Activated naive CD4-positive, alpha-beta T cell treated with anti-CD3 and anti-CD28 coated beads for 36 hours (primary cell): ENCODE measurements at regions of chr12 and their contacts with region 1.

Region 1: DNA sequence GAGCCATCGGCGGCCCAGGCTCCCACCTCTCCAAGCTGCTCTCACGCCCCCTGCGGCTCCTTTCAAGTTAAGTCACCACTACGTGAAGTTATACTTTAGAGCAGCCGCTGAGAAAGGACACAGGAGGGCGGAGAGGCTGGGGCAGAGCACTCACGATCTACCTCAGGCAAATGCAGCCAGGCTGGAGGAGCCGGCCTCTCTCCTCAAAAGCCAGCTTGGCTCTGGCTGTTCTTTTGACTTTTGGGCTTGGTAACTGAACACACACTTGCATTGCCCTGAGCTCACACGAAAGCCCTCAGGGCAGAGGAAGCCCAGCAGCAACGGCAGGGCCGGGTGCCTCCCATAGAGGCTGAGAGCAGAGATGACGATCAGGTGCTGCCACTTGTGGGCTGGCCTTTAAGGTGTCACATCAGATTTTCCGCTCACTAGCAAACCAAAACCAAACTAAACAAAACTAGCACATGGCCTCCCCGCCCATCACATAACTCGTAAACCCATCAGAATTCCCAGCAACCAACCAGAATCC is 75.2 kb downstream of the PITPNM2 start:
- DNase-seq: peak; percentile 90
- H3K4me3 Mint-ChIP-seq: peak overlapping the region; percentile 67
- H3K27ac Mint-ChIP-seq: peak overlapping the region; percentile 93
- H3K4me1 Mint-ChIP-seq: peaks cover 44% of the 10 kb centered on the region
- H3K27me3 Mint-ChIP-seq: no peaks in the 10 kb centered on the region

Region 2: DNA sequence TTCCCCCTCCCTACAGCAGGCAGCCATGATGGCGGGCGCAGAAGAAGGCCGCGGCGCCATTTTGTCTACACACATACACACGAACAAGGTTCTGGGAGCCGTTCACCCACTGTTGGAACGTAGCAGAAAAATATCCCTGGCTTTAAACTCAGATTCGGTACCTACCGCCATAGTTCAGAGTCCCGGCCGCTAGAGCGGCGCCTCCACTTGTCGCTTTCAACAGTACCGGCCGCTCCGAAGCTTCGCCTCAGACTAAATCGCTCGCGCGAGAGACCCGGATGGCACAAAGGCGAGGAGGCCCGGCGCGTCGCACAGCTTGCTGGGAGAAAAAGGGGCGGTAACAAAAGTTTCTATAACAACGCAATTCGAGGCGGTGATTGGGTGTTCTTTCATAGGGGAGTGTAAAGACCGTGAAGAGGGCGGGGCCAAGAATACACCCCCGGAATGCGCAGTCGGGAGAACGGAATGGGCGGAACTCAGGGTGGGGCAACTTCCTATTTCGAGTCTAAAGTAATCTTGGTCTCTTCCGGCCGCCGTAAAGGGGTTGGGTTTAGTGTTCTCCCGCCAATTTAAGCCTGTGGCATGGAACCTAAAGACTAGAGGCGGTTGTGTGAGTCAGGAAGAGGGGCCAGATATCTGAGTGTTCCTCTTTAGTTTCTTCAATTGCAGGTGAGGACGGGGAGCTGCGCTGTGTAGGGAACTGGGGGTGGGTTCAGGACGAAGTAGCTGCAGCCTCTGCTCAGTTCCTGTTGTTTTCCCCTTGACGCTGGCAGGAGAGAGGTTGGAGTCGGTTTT is 548.8 kb before region 1 on chr12 and contains the starts of genes KNTC1 and RSRC2:
- CTCF ChIA-PET with region 1: no interaction called
- intact Hi-C with region 1: loop called (anchors 1 kb)
- DNase-seq: peak; percentile 100
- H3K4me3 Mint-ChIP-seq: no peak within 1 kb of the TSS
- H3K27ac Mint-ChIP-seq: no peak within 1 kb of the TSS
- H3K4me1 Mint-ChIP-seq: peaks cover 49% of the 10 kb centered on the region
- H3K27me3 Mint-ChIP-seq: no peaks in the 10 kb centered on the region
- total RNA-seq, gene KNTC1: 141 to 142 TPM
- total RNA-seq, gene RSRC2: 117 to 127 TPM

Region 3: GRCh38 chr12:122974274-122974891 is 101.3 kb before region 1 on chr12:
- CTCF ChIA-PET with region 1: no interaction called
- intact Hi-C with region 1: loop called (anchors 1 kb)
- DNase-seq: peak; percentile 100
- H3K4me3 Mint-ChIP-seq: peak overlapping the region; percentile 90
- H3K27ac Mint-ChIP-seq: peak overlapping the region; percentile 100
- H3K4me1 Mint-ChIP-seq: peaks cover 33% of the 10 kb centered on the region
- H3K27me3 Mint-ChIP-seq: no peaks in the 10 kb centered on the region

Region 4: DNA sequence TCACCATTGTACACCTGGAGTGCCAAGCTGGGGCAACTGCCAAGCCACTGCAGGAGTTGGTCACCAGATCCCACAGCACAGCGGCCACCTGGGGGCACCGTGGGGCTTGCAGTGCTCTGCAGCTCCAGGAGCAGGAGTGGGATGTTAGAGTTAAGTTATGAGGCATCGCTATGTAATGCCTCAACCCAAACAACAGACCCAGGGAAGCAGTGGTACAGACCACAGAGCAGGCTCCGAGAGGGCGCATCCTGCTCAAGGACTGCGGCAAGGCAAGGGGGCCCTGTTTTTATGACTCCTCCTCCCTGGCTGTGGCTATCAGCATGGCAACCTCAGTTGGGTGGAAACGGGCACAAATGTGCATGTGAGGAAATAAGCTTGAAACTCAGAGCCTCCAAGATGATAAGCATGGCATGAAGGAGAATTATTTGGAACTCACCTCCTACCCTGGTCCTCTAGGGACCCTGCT is 32.1 kb before region 1 on chr12:
- CTCF ChIA-PET with region 1: interaction called, 53 read pairs
- intact Hi-C with region 1: loop called (anchors 1 kb)
- DNase-seq: peak; percentile 86
- H3K4me3 Mint-ChIP-seq: no peak overlapping the region
- H3K27ac Mint-ChIP-seq: peak overlapping the region; percentile 3
- H3K4me1 Mint-ChIP-seq: peaks cover 44% of the 10 kb centered on the region
- H3K27me3 Mint-ChIP-seq: no peaks in the 10 kb centered on the region

Region 5: GRCh38 chr12:123120452-123121166 is 44.9 kb after region 1 on chr12:
- CTCF ChIA-PET with region 1: interaction called, 9 read pairs
- intact Hi-C with region 1: loop called (anchors 1 kb)
- DNase-seq: peak; percentile 75
- H3K4me3 Mint-ChIP-seq: no peak overlapping the region
- H3K27ac Mint-ChIP-seq: peak overlapping the region; percentile 68
- H3K4me1 Mint-ChIP-seq: peaks cover 65% of the 10 kb centered on the region
- H3K27me3 Mint-ChIP-seq: no peaks in the 10 kb centered on the region

Region 6: DNA sequence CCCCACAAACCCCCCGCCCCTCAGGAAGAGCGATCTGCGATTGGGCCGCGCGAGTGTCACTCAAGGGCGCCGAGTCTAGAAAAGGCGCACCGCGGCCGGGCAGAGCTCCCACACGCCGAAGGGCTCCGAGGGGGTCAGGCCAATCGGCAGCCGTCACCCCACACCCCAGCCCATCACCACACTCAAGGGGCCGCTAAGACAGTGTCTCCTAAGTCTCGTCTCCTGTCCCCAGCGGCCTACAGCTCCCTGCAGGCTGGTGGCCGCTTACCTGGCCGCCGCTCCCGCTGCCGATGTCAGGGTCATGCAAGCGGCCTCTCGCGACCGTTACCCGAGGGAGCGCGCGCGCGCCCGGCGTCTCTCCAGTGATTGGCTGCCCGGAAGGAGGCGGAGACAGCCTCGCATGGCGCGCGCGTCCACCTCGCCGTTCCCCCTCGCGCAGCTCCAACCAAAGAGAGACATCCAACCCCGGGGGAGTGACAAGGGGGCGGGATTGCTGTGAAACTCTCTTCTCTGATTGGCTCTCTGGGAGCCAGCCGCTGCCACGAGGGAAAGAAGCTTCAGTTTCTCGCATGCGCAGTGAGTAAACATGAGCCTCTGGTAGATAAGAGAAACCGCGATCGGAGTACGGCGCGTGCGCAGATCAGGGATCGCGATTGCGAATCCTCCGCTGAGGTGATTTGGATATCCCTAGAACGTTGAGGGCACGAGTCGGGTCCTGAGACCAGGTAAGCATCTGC is 157.3 kb after region 1 on chr12 and contains the starts of genes MPHOSPH9 and MTRFR:
- CTCF ChIA-PET with region 1: interaction called, 3 read pairs
- intact Hi-C with region 1: loop called (anchors 1 kb)
- DNase-seq: peak; percentile 100
- H3K4me3 Mint-ChIP-seq: peak within 1 kb of the TSS; percentile 96
- H3K27ac Mint-ChIP-seq: peak within 1 kb of the TSS; percentile 99
- H3K4me1 Mint-ChIP-seq: peaks cover 58% of the 10 kb centered on the region
- H3K27me3 Mint-ChIP-seq: no peaks in the 10 kb centered on the region
- total RNA-seq, gene MPHOSPH9: 111 to 114 TPM
- total RNA-seq, gene MTRFR: 27.7 to 27.8 TPM

Region 7: DNA sequence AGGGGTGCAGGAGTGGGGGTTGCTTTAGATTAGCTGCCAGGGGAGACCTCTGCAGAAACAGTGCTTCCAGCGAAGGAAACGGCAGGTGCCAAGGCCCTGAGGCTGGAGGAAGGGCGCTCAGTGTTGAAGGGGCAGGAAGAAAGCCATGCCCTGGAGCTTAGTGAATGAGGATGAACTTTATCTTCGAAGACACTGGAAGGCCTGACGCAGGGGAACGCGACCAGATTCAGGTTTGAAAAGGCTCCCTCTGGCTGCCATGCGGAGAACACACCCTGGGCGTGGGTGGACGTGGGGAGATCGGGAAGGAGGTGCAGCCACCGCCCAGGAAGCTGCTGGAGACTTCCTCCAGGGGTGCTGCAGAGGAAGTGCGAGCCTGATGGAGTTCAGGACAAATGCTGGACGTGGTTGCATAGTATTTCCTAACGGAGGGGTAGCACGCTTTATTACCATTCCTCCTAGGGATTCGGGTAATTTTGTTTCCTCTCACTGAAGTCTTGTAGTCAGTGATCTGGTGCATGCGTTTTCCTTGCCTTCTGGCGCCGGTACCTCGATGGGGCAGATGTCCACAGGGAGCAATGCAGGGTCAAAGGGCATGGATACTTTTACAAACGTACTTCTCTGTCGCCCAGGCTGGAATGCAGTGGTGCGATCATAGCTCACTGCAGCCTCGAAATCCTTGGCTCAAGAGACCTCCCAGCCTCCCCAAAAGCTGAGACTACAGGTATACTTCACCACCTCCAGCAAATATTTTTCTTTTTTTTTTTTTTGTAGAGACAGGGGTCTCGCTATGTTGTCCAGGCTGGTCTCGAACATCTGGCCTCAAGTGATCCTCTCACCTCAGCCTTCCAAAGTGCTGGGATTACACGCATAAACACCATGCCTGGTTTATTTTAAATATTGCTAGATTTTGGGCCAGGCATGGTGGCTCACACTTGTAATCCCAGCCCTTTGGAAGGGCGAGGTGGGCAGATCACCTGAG is 1865.1 kb after region 1 on chr12:
- CTCF ChIA-PET with region 1: no interaction called
- intact Hi-C with region 1: loop called (anchors 5 kb)
- DNase-seq: peak; percentile 96
- H3K4me3 Mint-ChIP-seq: no peak overlapping the region
- H3K27ac Mint-ChIP-seq: no peak overlapping the region
- H3K4me1 Mint-ChIP-seq: peaks cover 8% of the 10 kb centered on the region
- H3K27me3 Mint-ChIP-seq: no peaks in the 10 kb centered on the region